Activated T-helper 2 cell treated with anti-CD3 and anti-CD28 coated beads, Interferon-gamma antibody, Interleukin-2, Interleukin-4, amounts not matched to agents 10 μg/mL and 5 μg/mL and 100 μg/mL, durations not matched to agents 14 hours and 24 hours and 36 hours (primary cell): ENCODE measurements at regions of chr16 and their contacts with region 1.

Region 1: GRCh38 chr16:8924214-8924613 is 39.5 kb downstream of the USP7 start:
- DNase-seq: no peak
- H3K4me3 Mint-ChIP-seq: no peak overlapping the region
- H3K27ac Mint-ChIP-seq: peak overlapping the region; percentile 53
- H3K4me1 Mint-ChIP-seq: peaks cover 57% of the 10 kb centered on the region
- H3K27me3 Mint-ChIP-seq: no peaks in the 10 kb centered on the region

Region 2: GRCh38 chr16:8660841-8661301 is 263.3 kb before region 1 on chr16:
- intact Hi-C with region 1: no loop called
- DNase-seq: peak; percentile 44
- H3K4me3 Mint-ChIP-seq: no peak overlapping the region
- H3K27ac Mint-ChIP-seq: no peak overlapping the region
- H3K4me1 Mint-ChIP-seq: peaks cover 8% of the 10 kb centered on the region
- H3K27me3 Mint-ChIP-seq: no peaks in the 10 kb centered on the region

Region 3: GRCh38 chr16:8936421-8936820 is 12.2 kb after region 1 on chr16:
- intact Hi-C with region 1: loop called (anchors 1 kb)
- DNase-seq: peak; percentile 62
- H3K4me3 Mint-ChIP-seq: no peak overlapping the region
- H3K27ac Mint-ChIP-seq: peak overlapping the region; percentile 36
- H3K4me1 Mint-ChIP-seq: peaks cover 41% of the 10 kb centered on the region
- H3K27me3 Mint-ChIP-seq: no peaks in the 10 kb centered on the region

Region 4: DNA sequence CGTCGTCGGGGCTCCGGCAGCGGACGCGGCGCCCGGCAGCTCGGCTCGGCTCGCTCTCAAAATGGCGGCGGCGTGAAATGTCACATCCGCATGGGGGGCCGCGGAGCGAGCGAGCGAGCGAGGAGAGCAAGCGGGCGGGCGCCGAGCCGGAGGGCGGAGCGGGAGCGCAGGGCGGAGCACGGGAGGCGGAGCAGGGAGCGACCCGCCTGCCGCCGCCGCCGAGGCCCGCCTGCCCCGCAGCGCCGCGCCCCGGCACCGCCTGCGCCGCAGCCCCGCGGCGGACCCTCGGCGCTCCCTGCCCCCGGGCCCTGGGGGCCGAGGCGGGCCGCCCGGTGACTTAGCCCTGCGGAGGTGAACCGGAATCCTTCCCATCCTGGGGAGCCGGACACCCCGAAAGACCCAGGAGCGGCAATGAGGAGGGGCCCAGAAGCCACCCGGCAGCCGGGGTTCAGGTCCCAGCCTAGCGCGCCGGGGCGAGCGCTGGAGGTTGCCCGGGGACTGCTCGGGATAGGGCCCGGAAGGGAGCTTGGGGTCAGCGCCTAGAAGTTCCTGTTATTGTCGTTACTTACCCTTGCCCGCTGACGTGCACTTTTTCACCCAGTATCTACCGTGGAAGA is 39.7 kb after region 1 on chr16 and contains the start of gene USP7:
- intact Hi-C with region 1: loop called (anchors 5 kb)
- DNase-seq: peak; percentile 90
- H3K4me3 Mint-ChIP-seq: peak within 1 kb of the TSS; percentile 91
- H3K27ac Mint-ChIP-seq: peak within 1 kb of the TSS; percentile 38
- H3K4me1 Mint-ChIP-seq: peaks cover 39% of the 10 kb centered on the region
- H3K27me3 Mint-ChIP-seq: peaks cover 7% of the 10 kb centered on the region
- total RNA-seq, gene USP7: 164 and 176 TPM in 2 replicates